Activated CD8-positive, alpha-beta T cell treated with anti-CD3 and anti-CD28 coated beads for 36 hours (primary cell): ENCODE measurements at regions of chr12 and their contacts with region 1.

Region 1: DNA sequence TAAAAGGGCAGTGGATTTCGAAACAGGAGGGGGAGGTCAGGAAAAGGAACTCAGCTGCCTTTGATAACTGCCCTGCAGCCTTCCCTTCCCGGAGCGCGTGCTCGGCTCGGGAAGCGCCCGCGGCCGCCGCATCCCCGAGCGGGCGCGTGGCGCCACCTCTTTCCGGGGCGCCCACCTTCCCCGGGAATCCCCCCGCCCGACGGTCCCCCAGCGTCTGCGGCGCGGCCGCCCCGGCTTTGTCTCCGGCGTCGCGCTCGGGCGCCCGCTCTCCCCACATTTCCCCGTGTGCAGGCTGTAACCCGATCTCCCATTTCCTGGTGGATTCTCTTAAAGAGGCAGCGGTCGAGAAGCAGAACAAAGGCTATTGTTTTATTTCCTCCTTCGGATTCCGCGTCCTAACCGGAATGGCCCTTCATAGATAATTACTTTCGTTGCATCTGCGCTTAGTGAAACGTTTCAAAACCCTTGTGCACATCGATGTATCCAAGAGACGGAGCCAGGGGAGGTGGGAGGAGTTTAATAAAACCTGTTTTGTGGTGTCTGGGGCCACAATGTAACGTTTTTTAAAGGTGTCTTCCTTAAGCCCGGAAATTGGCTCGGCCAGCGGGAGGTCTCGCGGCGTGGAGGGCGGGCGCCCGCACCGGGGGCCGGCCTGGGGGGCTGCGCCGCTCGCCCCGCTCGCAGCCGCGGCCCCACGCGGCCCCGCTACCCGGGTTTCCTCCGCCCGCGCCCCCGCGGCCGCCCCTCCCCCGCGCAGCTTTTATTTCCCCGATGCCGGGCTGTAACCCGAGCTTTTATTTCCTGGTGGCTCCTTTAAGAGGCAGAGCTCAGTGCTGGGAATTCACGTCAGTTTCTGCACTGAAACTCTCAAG is at the start of gene ETV6:
- DNase-seq: peak; percentile 85
- ATAC-seq: peak; percentile 52
- H3K4me3 Mint-ChIP-seq: peak within 1 kb of the TSS; percentile 86
- H3K27ac Mint-ChIP-seq: peak within 1 kb of the TSS; percentile 95
- H3K4me1 Mint-ChIP-seq: peaks cover 25% of the 10 kb centered on the region
- H3K27me3 Mint-ChIP-seq: no peaks in the 10 kb centered on the region
- CTCF ChIP-seq: no peak
- total RNA-seq, gene ETV6: 20.5 to 22.7 TPM

Region 2: GRCh38 chr12:11730299-11731041 is 81.4 kb after region 1 on chr12:
- CTCF ChIA-PET with region 1: interaction called, 5 read pairs
- POLR2A ChIA-PET with region 1: interaction called, 10 read pairs
- intact Hi-C with region 1: no loop called
- DNase-seq: no peak
- ATAC-seq: no peak
- H3K4me3 Mint-ChIP-seq: no peak overlapping the region
- H3K27ac Mint-ChIP-seq: peak overlapping the region; percentile 89
- H3K4me1 Mint-ChIP-seq: peaks cover 74% of the 10 kb centered on the region
- H3K27me3 Mint-ChIP-seq: no peaks in the 10 kb centered on the region
- CTCF ChIP-seq: no peak

Region 3: DNA sequence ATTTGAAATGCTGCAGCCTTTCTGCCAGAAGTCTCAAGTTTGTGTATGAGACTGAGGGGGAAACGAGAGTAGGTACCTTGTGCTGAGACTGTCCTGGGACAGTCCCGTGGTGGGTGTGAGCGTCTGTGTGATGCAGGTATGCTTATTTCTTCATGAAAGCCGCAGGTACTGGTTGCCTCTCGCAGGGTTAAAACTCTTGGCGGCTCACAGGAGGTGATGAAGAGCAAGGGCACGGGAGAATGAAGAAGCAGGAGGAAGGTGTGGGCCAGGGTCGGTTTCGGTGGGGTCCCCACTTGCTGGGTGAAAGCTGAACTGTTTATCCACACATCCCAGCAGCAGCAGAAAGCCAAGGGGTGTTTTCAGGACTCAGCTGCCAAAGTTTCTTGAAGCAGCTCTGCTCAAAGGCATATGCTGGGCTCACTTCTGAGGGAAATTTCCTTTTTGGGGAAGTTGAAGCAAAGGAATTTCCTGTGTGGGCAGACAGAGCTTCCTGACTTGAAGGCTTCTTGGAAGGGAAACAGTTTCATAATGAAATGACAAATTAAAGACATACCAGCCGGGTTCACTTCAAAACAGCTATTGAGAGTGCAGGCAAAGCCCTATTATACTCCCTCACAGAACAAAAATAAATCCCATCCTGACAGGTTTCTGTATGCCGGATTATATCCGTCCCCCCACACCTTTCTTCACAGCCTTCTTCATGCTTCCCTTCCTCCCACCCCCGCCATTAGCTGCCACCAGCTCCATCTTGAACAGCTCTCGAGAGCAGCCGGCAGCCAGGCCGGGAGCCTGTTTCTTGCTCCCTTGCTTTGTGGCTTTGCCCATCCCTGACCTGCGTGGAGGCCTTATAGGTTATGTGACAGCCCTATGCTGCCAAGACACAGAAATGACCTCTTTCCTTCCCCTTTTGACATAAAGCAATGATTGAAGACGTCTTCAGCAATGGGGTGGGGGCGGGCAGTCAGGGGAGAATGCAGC is 117.0 kb after region 1 on chr12:
- CTCF ChIA-PET with region 1: no interaction called
- POLR2A ChIA-PET with region 1: interaction called, 5 read pairs
- intact Hi-C with region 1: loop called (anchors 5 kb)
- DNase-seq: peak; percentile 91
- ATAC-seq: peak; percentile 96
- H3K4me3 Mint-ChIP-seq: peak overlapping the region; percentile 41
- H3K27ac Mint-ChIP-seq: peak overlapping the region; percentile 85
- H3K4me1 Mint-ChIP-seq: peaks cover 93% of the 10 kb centered on the region
- H3K27me3 Mint-ChIP-seq: no peaks in the 10 kb centered on the region
- CTCF ChIP-seq: no peak

Region 4: GRCh38 chr12:11906286-11906935 is 257.3 kb after region 1 on chr12:
- CTCF ChIA-PET with region 1: no interaction called
- POLR2A ChIA-PET with region 1: interaction called, 3 read pairs
- intact Hi-C with region 1: loop called (anchors 10 kb)
- DNase-seq: no peak
- ATAC-seq: no peak
- H3K4me3 Mint-ChIP-seq: no peak overlapping the region
- H3K27ac Mint-ChIP-seq: no peak overlapping the region
- H3K4me1 Mint-ChIP-seq: peaks cover 34% of the 10 kb centered on the region
- H3K27me3 Mint-ChIP-seq: peaks cover 4% of the 10 kb centered on the region
- CTCF ChIP-seq: no peak